ENCODE measurements at regions of chr13 and their contacts with region 1.

Region 1: DNA sequence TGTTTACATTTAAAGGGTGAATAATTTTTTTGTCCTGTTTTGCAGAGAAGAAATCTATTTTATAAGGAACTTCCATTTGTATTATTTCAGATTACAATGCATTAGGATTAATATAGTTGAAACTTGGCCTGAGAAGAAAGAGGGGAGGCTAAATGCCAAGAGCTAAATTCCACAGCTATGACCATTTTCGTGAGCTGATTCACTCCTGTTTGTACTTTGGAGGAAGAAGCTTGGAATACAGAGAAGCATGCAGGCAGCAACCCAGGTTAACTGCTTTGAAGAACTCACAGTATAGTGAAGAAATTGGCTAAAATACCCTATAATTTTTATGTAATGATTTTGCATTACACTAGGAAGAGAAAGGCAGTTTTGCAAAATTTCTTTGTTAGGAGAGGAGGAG is 309.4 kb upstream of the KLF12 start:
- DNase-seq: peak; percentile 84
- ATAC-seq: peak; percentile 67
- H3K4me3 ChIP-seq: peak overlapping the region; percentile 49
- H3K27ac ChIP-seq: peak overlapping the region; percentile 99
- H3K4me1 ChIP-seq: peaks cover 40% of the 10 kb centered on the region
- H3K27me3 ChIP-seq: no peaks in the 10 kb centered on the region
- CTCF ChIP-seq: no peak

Region 2: GRCh38 chr13:73531014-73531413 is 912.6 kb before region 1 on chr13:
- CTCF ChIA-PET with region 1: no interaction called
- POLR2A ChIA-PET with region 1: no interaction called
- intact Hi-C with region 1: no loop called
- DNase-seq: no peak
- ATAC-seq: no peak
- H3K4me3 ChIP-seq: no peak overlapping the region
- H3K27ac ChIP-seq: no peak overlapping the region
- H3K4me1 ChIP-seq: no peaks in the 10 kb centered on the region
- H3K27me3 ChIP-seq: no peaks in the 10 kb centered on the region
- CTCF ChIP-seq: no peak

Region 3: DNA sequence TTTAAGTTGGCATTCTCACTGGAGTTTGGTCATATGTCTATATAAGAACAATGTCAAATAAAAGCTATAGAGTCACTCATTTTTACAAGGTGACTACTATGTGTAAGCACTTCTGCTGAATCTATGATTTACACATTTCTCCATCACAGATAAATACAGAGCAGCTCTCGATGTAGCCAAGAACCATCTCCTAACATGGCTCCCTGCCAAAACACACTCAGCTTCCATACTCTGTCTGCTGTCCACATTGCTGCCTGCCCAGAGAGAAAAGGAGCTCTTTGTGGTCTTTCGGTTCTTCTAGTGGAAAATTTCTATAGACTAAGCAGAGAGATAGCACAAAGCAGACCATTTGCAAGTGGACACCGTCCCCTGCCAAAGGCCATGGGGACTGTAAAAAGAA is 118.5 kb before region 1 on chr13:
- CTCF ChIA-PET with region 1: no interaction called
- POLR2A ChIA-PET with region 1: no interaction called
- intact Hi-C with region 1: loop called (anchors 1 kb)
- DNase-seq: peak; percentile 90
- ATAC-seq: peak; percentile 97
- H3K4me3 ChIP-seq: peak overlapping the region; percentile 22; the same call in 1 of the 2 replicates
- H3K27ac ChIP-seq: peak overlapping the region; percentile 89
- H3K4me1 ChIP-seq: peaks cover 25% of the 10 kb centered on the region
- H3K27me3 ChIP-seq: no peaks in the 10 kb centered on the region
- CTCF ChIP-seq: no peak

Region 4: DNA sequence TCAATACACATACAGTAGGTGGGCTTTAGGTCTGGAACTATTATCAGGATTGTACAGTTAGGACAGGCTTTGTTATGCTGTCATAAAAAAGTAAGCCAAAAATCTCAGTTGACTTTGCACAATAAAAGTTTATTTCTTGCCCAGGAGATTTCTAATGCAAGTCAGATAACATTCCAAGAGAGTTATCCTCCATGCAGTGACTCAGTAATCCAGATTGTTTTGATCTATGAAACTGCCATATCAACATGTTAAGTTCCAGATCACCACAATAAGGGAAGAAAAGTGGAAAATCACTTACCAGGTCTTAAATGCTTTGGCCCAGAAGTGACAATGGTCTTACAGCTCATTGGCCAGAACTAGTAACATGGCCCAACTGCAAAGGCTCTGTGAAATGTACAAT is 326.7 kb after region 1 on chr13:
- CTCF ChIA-PET with region 1: no interaction called
- POLR2A ChIA-PET with region 1: no interaction called
- intact Hi-C with region 1: loop called (anchors 5 kb)
- DNase-seq: peak; percentile 78
- ATAC-seq: peak; percentile 55
- H3K4me3 ChIP-seq: no peak overlapping the region
- H3K27ac ChIP-seq: peak overlapping the region; percentile 66
- H3K4me1 ChIP-seq: peaks cover 34% of the 10 kb centered on the region
- H3K27me3 ChIP-seq: no peaks in the 10 kb centered on the region
- CTCF ChIP-seq: no peak